Natural killer cell (primary cell): ENCODE measurements at regions of chr6 and their contacts with region 1.

Region 1: GRCh38 chr6:5838656-5839396 is 167.9 kb downstream of the NRN1 start:
- DNase-seq: no peak
- ATAC-seq: no peak
- H3K4me3 ChIP-seq: no peak overlapping the region
- H3K4me3 Mint-ChIP-seq: no peak overlapping the region
- H3K27ac ChIP-seq: no peak overlapping the region
- H3K27ac Mint-ChIP-seq: peak overlapping the region in 1 of 2 donors; percentile 60
- H3K4me1 ChIP-seq: no peaks in the 10 kb centered on the region
- H3K4me1 Mint-ChIP-seq: peaks cover 0 to 14% of the 10 kb centered on the region in 2 donors
- H3K27me3 ChIP-seq: no peaks in the 10 kb centered on the region
- H3K27me3 Mint-ChIP-seq: peaks cover 0 to 4% of the 10 kb centered on the region in 2 donors
- CTCF ChIP-seq: no peak

Region 2: DNA sequence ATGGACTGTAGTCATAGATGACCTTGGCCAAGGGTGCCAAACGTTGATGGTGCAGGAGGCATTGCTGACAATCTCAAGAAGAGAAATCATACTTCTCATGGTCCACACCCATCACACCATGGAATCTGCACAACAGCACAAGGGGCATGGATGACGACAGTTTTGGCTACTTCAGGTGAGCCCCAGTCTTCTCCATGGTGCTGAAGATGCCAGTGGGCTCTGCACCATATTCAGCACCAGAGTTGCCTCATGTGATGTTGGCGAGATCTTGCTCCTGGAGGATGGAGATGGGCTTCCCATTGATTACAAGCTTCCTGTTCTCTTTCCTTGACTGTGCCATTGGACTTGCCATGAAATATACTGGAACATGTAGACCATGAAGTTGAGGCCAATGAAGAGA is 21.0 kb before region 1 on chr6:
- intact Hi-C with region 1: loop called (anchors 1 kb)
- DNase-seq: no peak
- ATAC-seq: no peak
- H3K4me3 ChIP-seq: no peak overlapping the region
- H3K4me3 Mint-ChIP-seq: no peak overlapping the region
- H3K27ac ChIP-seq: no peak overlapping the region
- H3K27ac Mint-ChIP-seq: no peak overlapping the region
- H3K4me1 ChIP-seq: peaks cover 7% of the 10 kb centered on the region
- H3K4me1 Mint-ChIP-seq: peaks cover 16 to 22% of the 10 kb centered on the region in 2 donors
- H3K27me3 ChIP-seq: no peaks in the 10 kb centered on the region
- H3K27me3 Mint-ChIP-seq: no peaks in the 10 kb centered on the region
- CTCF ChIP-seq: no peak